Cardiac septum (tissue), 1 donor: ENCODE measurements at regions of chr18 and their contacts with region 1.

Region 1: DNA sequence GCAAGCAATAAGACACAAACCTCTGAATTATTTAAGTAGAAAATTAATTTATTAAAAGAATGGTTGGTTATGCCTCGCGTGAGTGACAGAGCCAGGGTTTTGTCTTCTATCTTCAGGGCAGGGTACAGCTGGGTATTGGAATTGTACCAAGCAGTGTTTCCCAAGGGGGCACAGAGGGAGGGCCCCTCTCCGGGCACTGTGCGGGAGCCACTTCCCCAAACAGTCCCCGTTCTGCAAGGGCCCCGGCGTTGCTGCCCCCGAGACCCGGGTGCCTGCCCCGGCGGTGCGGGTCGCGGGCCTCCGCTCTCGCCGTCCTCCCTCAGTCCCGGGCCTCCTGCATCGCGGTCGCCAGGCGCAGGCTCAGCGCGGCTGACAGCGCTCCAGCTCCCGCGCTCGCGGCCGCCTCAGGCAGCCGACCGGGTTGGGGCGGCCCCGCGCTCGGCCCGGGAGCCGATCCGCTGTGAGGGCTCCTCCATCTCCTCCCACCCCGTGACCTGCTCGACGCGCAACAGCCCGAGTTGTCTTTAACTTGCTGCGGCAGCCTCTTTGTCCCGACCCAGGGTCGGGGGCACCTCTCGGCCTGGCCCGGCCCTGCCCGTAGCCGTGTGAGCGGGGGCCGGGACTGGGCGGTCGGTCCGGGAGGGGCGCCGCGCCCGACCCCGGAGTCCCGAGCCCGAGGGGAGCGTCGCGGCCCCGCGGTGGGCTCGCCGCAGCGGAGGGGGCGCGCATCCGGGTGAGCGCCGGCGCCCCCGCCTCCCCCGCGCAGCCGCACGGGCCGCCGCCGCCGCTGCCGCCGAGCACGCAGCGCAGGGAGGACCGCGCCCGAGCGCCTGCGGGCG is 620 bp upstream of the GALNT1 start:
- DNase-seq: peak; percentile 83

Region 2: DNA sequence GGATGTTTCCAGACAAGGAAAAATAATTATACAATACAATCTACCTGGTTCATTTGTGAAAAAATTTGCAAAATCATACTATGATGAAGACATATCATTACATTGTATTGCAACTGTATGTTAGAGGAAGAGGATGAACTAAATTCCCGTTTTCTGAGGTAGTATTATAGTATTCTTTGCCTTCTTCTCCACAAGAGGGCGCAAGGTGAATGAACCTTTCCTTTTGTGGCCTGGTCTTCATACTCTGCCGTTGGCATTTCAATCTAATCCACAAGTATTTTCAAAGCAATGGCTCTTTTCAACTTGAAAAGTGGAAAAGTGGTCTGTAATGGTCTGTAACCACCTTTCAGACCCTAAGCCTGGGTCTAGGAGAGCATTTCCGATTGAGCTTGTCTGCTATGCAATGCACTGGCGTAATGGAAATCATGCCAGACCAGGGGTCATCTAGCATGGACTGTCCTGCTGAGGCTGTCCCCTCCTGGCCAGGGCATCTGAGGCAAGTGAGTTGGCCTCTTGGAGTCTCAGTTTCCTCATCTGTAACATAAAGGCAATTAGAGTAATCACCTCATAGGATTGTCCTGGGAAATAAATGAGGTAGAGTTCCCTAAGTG is 172.9 kb before region 1 on chr18:
- intact Hi-C with region 1: loop called (anchors 10 kb)
- DNase-seq: no peak

Region 3: GRCh38 chr18:35497370-35498197 is 83.3 kb before region 1 on chr18 and contains the start of gene INO80C:
- intact Hi-C with region 1: loop called (anchors 10 kb)
- DNase-seq: peak; percentile 96
- total RNA-seq, gene INO80C: 21.8 TPM

Region 4: DNA sequence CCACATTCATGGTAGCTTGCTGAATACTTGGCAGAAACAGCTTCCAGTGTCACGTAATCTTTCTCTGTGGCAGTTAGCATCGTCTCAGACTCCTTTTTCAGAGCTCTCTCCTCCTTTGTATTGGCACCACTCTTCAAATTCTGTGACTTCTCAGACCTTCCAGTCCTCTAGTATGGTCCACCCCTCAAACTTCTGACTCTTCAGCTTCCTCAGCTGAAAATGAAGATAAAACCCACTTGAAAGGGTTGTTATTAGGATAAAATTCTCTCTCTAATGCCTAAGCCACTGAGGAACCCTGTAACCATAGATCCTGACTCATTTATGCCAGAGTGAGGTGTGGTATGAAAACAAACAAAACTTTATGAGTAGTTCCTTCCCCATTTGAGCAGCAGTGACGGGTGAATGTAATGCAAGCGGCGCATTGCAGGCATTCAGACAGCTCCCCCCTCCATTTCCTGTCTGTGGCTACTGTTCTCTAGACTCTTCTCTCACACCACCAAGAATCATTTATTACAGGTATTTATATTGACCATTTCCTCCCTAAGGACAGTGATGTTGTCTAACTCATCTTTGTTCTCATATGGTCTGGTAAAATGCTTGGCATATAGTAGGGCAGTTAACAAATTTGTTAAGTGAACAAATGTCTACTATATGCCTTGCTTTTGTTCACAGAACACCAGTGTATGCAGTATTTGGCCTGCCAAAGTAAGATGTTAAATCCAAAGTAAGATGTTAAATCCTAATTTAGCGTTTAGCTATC is 35.9 kb after region 1 on chr18:
- intact Hi-C with region 1: loop called (anchors 2 kb)
- DNase-seq: peak; percentile 80

Region 5: DNA sequence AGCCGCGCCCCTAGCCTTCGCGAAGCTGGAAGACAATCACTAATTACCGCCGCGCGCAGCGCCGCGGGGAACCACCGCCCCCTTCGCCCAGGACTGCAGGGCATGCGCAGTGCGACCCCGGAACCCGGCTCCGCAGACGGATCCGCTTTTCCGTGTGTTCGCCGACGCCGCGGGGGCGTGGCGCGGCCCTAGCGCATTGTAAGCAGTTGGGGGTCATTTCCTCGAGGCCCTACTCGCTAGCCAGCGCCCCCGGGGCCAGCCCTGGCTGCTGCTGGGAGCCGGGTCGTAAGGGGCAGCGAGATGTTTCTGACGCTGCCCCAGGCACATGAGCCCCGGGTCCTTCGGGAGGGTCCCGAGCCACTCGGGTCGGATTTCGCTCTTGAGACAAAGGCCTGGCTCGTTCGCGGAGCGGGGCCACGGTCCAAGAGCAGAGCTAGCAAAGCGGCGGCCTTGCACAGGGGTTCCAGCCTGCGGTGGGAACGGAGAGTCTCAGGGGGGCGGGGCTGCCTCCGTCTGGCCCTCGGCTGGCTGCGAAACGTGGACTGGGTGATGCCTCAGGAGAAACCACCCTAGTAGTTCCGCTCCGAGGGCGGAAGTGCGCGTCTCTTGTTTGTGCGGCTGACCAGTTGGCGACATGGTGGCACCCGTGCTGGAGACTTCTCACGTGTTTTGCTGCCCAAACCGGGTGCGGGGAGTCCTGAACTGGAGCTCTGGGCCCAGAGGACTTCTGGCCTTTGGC is 548.5 kb after region 1 on chr18 and contains the starts of genes ELP2 and SLC39A6:
- intact Hi-C with region 1: loop called (anchors 5 kb)
- DNase-seq: peak; percentile 99
- total RNA-seq, gene ELP2: 50.4 TPM
- total RNA-seq, gene SLC39A6: 15.6 TPM